Activated T-helper 2 cell treated with anti-CD3 and anti-CD28 coated beads, Interferon-gamma antibody, Interleukin-2, Interleukin-4, amounts not matched to agents 10 μg/mL and 5 μg/mL and 100 μg/mL, durations not matched to agents 14 hours and 24 hours and 36 hours (primary cell): ENCODE measurements at regions of chr16 and their contacts with region 1.

Region 1: DNA sequence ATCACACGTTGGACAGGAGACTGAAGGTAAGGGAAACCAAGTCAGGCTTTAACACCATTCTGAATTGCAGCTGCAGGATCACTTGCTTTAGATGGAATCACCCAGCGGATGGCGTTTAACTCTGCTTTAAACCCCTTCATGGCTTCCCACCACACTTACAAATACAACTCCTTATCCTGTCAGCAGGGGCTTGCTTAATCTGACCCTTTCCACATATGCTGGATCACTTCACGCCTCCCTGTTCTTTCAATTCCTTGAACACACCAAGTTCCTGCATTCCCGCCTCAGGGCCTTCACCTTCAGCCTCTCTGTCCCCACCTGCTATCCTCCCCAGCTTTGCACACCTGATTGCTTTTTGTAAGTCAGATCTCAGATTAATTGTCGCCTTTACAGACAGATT is 442.2 kb downstream of the MAF start:
- DNase-seq: no peak
- H3K4me3 Mint-ChIP-seq: no peak overlapping the region
- H3K27ac Mint-ChIP-seq: no peak overlapping the region
- H3K4me1 Mint-ChIP-seq: peaks cover 49% of the 10 kb centered on the region
- H3K27me3 Mint-ChIP-seq: no peaks in the 10 kb centered on the region

Region 2: GRCh38 chr16:79089735-79090284 is 68.5 kb before region 1 on chr16:
- intact Hi-C with region 1: loop called (anchors 5 kb)
- DNase-seq: peak; percentile 69
- H3K4me3 Mint-ChIP-seq: peak overlapping the region; percentile 51
- H3K27ac Mint-ChIP-seq: peak overlapping the region; percentile 89
- H3K4me1 Mint-ChIP-seq: peaks cover 53% of the 10 kb centered on the region
- H3K27me3 Mint-ChIP-seq: no peaks in the 10 kb centered on the region